Naive thymus-derived CD4-positive, alpha-beta T cell (primary cell): ENCODE measurements at regions of chr19 and their contacts with region 1.

Region 1: GRCh38 chr19:40777937-40778705 is at the start of gene RAB4B:
- DNase-seq: peak; percentile 99 to 100 (median 100)
- ATAC-seq: peak; percentile 92
- H3K4me3 ChIP-seq: peak within 1 kb of the TSS; percentile 97
- H3K4me3 Mint-ChIP-seq: peak within 1 kb of the TSS; percentile 91 to 99 (median 96)
- H3K27ac ChIP-seq: peak within 1 kb of the TSS; percentile 92
- H3K27ac Mint-ChIP-seq: peak within 1 kb of the TSS; percentile 87 to 99 (median 98)
- H3K4me1 ChIP-seq: peaks cover 18 to 24% of the 10 kb centered on the region in 2 donors
- H3K4me1 Mint-ChIP-seq: peaks cover 31 to 49% (median 39%) of the 10 kb centered on the region in 7 donors
- H3K27me3 ChIP-seq: no peaks in the 10 kb centered on the region
- H3K27me3 Mint-ChIP-seq: no peaks in the 10 kb centered on the region
- total RNA-seq, gene RAB4B: 37.6 to 63.0 (median 52.5) TPM

Region 2: DNA sequence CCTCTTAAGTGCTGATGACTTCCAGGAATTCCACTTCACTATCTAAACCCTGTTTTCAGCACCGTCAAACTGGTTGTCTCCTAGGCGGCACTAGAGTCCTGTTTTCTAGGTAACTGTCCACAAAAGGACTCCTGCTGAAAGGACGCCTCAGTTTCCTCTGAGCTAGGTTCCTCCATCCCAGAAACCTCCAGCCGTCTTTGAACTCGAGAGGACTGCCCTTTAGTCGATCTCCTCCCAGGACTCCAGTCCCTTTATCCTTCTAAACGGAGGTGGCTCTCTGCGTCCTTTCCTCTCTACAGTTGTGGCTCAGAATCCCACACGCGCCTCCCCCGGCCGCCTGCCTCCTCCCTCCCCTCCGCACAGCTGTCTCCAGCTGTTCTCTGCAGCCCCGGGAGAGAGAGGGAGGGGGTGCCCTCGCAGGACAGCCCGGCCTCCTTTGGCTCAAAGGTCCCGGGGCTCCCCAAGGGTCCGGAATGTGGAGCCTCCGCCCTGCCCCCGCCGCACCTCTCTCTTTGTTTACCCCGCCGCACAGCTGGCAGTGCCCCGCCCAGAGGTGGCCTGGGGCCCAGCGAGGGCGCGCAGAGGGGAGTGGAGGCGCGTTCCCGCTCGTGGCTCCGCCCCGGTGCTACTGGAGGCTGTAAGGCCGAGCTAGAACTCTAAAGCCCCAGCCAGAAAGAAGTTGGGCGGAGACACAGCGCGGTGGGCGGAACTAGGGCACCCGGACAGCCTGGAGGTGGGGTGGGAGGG is 174.6 kb before region 1 on chr19:
- CTCF ChIA-PET with region 1: no interaction called
- POLR2A ChIA-PET with region 1: no interaction called
- intact Hi-C with region 1: no loop called
- DNase-seq: peak; percentile 82 to 96 (median 93)
- ATAC-seq: peak; percentile 86
- H3K4me3 ChIP-seq: peak overlapping the region; percentile 72
- H3K4me3 Mint-ChIP-seq: peak overlapping the region; percentile 84 to 98 (median 88)
- H3K27ac ChIP-seq: peak overlapping the region; percentile 35
- H3K27ac Mint-ChIP-seq: peak overlapping the region; percentile 72 to 93 (median 86)
- H3K4me1 ChIP-seq: peaks cover 54 to 61% of the 10 kb centered on the region in 2 donors
- H3K4me1 Mint-ChIP-seq: peaks cover 20 to 84% (median 71%) of the 10 kb centered on the region in 7 donors
- H3K27me3 ChIP-seq: peaks cover 10 to 21% of the 10 kb centered on the region in 2 donors
- H3K27me3 Mint-ChIP-seq: peaks cover 24 to 39% (median 30%) of the 10 kb centered on the region in 5 donors

Region 3: DNA sequence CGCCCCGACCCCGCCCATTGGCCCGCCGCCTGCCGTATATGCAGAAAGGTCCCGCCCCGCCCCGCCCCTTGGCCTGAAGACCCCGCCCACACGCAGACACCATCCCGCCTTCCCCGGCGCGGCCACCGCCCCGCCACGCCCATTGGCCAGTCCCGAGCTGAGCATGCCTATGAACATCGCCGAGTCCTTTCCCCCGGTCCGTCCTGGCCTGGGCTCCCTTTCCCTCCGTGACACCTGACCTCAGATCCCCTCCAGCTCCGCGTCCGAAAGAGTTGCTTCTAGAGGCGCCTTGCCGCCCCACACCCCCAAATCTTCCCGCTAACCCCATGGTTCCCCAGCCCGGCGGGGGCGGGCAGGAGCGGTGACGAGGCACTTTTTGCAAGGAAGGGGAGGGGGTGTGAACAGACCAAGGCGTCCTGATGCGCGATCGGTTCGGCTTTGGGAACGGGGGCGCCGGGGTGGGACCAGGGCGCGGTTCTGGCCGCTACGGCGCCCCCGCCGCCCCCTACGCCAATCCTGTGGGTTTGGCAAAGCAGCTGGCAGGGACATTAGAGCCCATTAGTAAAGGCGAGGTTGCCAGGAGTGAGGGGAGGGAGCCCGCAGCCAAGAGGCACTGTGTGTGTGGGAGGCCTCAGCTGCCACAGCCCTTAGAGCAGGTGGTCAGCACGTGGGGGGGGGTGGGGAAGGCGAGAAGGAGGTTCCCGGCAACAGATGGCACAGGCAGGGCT is 87.3 kb before region 1 on chr19:
- CTCF ChIA-PET with region 1: no interaction called
- POLR2A ChIA-PET with region 1: interaction called, 3 read pairs
- intact Hi-C with region 1: loop called (anchors 1 kb)
- DNase-seq: peak; percentile 60 to 90 (median 75)
- ATAC-seq: peak; percentile 92
- H3K4me3 ChIP-seq: peak overlapping the region; percentile 68
- H3K4me3 Mint-ChIP-seq: peak overlapping the region in 9 of 10 donors; percentile 78 to 96 (median 91)
- H3K27ac ChIP-seq: peak overlapping the region; percentile 55
- H3K27ac Mint-ChIP-seq: peak overlapping the region in 8 of 9 donors; percentile 58 to 94 (median 74)
- H3K4me1 ChIP-seq: peaks cover 0 to 6% of the 10 kb centered on the region in 2 donors
- H3K4me1 Mint-ChIP-seq: peaks cover 0 to 6% (median 4%) of the 10 kb centered on the region in 7 donors
- H3K27me3 ChIP-seq: no peaks in the 10 kb centered on the region
- H3K27me3 Mint-ChIP-seq: no peaks in the 10 kb centered on the region

Region 4: GRCh38 chr19:40762754-40763470 is 15.2 kb before region 1 on chr19:
- CTCF ChIA-PET with region 1: interaction called, 6 read pairs
- POLR2A ChIA-PET with region 1: interaction called, 7 read pairs
- intact Hi-C with region 1: loop called in 1 of 2 experiments (anchors 1 kb)
- DNase-seq: no peak
- ATAC-seq: no peak
- H3K4me3 ChIP-seq: no peak overlapping the region
- H3K4me3 Mint-ChIP-seq: no peak overlapping the region
- H3K27ac ChIP-seq: no peak overlapping the region
- H3K27ac Mint-ChIP-seq: peak overlapping the region in 5 of 9 donors; percentile 20 to 74 (median 53)
- H3K4me1 ChIP-seq: peaks cover 8 to 17% of the 10 kb centered on the region in 2 donors
- H3K4me1 Mint-ChIP-seq: peaks cover 10 to 52% (median 43%) of the 10 kb centered on the region in 7 donors
- H3K27me3 ChIP-seq: no peaks in the 10 kb centered on the region
- H3K27me3 Mint-ChIP-seq: no peaks in the 10 kb centered on the region

Region 5: GRCh38 chr19:40806488-40807468 is 28.7 kb after region 1 on chr19:
- CTCF ChIA-PET with region 1: interaction called, 10 read pairs
- POLR2A ChIA-PET with region 1: interaction called, 84 read pairs
- intact Hi-C with region 1: loop called in 1 of 2 experiments (anchors 1 kb)
- DNase-seq: peak; percentile 65 to 88 (median 81)
- ATAC-seq: peak; percentile 71
- H3K4me3 ChIP-seq: peak overlapping the region; percentile 53
- H3K4me3 Mint-ChIP-seq: peak overlapping the region; percentile 81 to 100 (median 90)
- H3K27ac ChIP-seq: peak overlapping the region; percentile 87
- H3K27ac Mint-ChIP-seq: peak overlapping the region; percentile 95 to 99 (median 98)
- H3K4me1 ChIP-seq: peaks cover 66 to 80% of the 10 kb centered on the region in 2 donors
- H3K4me1 Mint-ChIP-seq: peaks cover 67 to 98% (median 85%) of the 10 kb centered on the region in 7 donors
- H3K27me3 ChIP-seq: no peaks in the 10 kb centered on the region
- H3K27me3 Mint-ChIP-seq: peaks cover 0 to 6% (median 0%) of the 10 kb centered on the region in 5 donors

Region 6: DNA sequence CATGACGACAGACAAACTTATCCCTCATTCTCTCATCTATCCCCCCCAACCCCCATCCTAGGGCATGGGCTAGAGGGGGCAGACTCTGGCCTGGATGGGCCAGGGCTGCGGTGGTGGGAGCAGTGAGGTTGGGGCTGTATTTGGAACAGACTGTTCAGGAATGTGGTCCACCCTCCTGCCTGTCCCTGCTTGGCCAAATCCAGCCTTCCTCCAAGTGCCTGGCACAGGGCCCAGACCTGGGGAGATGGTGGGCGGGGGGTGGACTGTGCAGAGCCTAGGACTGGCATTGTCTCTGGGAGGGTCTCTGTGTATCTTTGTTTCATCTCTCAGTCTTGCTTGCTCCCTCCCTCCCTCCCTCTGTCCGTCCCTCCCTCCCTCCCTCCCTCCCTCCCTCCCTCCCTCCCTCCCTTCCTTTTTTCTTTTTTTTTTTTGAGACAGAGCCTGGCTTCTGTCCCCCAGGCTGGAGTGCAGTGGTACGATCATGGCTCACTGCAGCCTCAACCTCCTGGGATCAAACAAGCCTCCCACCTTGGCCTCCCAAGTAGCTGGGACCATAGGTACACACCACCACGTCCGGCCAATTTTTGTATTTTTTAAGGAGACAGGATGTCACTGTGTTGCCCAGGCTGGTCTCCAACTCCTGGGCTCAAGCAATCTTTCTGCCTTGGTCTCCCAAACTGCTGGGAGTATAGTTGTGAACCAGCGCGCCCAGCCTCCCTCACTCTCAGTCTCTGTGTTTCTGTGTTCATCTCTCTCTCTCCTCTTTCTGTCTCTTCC is 35.2 kb after region 1 on chr19:
- CTCF ChIA-PET with region 1: interaction called, 4 read pairs
- POLR2A ChIA-PET with region 1: interaction called, 5 read pairs
- intact Hi-C with region 1: loop called (anchors 1 to 2 kb)
- DNase-seq: no peak
- ATAC-seq: no peak
- H3K4me3 ChIP-seq: no peak overlapping the region
- H3K4me3 Mint-ChIP-seq: peak overlapping the region in 9 of 10 donors; percentile 9 to 100 (median 91)
- H3K27ac ChIP-seq: no peak overlapping the region
- H3K27ac Mint-ChIP-seq: peak overlapping the region in 5 of 9 donors; percentile 13 to 90 (median 86)
- H3K4me1 ChIP-seq: peaks cover 8 to 20% of the 10 kb centered on the region in 2 donors
- H3K4me1 Mint-ChIP-seq: peaks cover 33 to 55% (median 52%) of the 10 kb centered on the region in 7 donors
- H3K27me3 ChIP-seq: no peaks in the 10 kb centered on the region
- H3K27me3 Mint-ChIP-seq: peaks cover 0 to 42% (median 0%) of the 10 kb centered on the region in 5 donors